CD8-positive, alpha-beta memory T cell (primary cell): ENCODE measurements at regions of chr7 and their contacts with region 1.

Region 1: DNA sequence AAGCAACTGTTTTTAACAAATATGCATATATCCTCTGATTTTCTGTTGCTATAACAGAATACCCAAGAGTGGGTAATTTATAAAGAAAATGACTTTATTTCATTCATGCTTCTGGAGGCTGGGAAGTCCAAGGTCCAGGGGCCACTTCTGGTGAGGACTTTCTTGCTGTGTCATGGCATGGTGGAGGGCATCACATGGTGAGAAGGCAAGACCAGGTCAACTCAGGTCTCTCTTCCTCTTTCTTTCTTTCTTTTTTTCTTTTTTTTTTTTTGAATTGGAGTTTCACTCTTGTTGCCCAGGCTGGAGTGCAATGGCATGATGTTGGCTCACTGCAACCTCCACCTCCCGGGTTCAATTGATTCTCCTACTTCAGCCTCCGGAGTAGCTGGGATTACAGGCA is 303.0 kb upstream of the C7orf33 start:
- DNase-seq: no peak
- H3K4me3 ChIP-seq: no peak overlapping the region
- H3K4me3 Mint-ChIP-seq: no peak overlapping the region
- H3K27ac ChIP-seq: no peak overlapping the region
- H3K27ac Mint-ChIP-seq: no peak overlapping the region
- H3K4me1 ChIP-seq: no peaks in the 10 kb centered on the region
- H3K4me1 Mint-ChIP-seq: no peaks in the 10 kb centered on the region
- H3K27me3 ChIP-seq: no peaks in the 10 kb centered on the region
- H3K27me3 Mint-ChIP-seq: peaks cover 5 to 16% of the 10 kb centered on the region in 2 donors

Region 2: DNA sequence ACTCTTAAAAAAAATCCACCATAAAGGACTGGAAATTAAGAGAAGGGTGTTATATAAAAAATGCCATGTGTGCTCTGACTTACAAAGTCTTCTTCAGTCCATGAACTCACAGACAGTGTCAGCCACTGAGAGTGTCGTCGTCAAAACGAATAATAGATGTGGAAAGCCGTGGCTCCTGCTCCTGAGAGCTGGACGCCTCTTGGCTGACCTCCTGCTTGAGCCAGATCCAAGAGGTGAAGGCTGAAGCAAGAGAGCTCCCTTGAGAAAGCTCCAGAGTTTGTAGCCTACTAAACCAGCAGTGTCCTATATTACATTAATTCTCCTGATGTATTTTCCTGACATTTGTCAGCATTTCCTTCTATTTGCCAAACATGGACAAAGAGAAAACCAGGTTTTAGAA is 68.8 kb after region 1 on chr7:
- CTCF ChIA-PET with region 1: no interaction called
- POLR2A ChIA-PET with region 1: interaction called, 10 read pairs
- DNase-seq: no peak
- H3K4me3 ChIP-seq: no peak overlapping the region
- H3K4me3 Mint-ChIP-seq: no peak overlapping the region
- H3K27ac ChIP-seq: no peak overlapping the region
- H3K27ac Mint-ChIP-seq: no peak overlapping the region
- H3K4me1 ChIP-seq: no peaks in the 10 kb centered on the region
- H3K4me1 Mint-ChIP-seq: no peaks in the 10 kb centered on the region
- H3K27me3 ChIP-seq: no peaks in the 10 kb centered on the region
- H3K27me3 Mint-ChIP-seq: peaks cover 3 to 12% of the 10 kb centered on the region in 2 donors